ENCODE measurements at regions of chr10 and their contacts with region 1.

Region 1: GRCh38 chr10:102678842-102679289 is 34.6 kb downstream of the TRIM8 start:
- DNase-seq: no peak
- H3K4me3 ChIP-seq: no peak overlapping the region
- H3K27ac ChIP-seq: no peak overlapping the region
- H3K27me3 ChIP-seq: no peaks in the 10 kb centered on the region
- CTCF ChIP-seq: peak; percentile 85

Region 2: GRCh38 chr10:102660888-102661657 is 17.8 kb before region 1 on chr10:
- CTCF ChIA-PET with region 1: no interaction called
- POLR2A ChIA-PET with region 1: interaction called, 19 read pairs
- DNase-seq: peak; percentile 71
- H3K4me3 ChIP-seq: no peak overlapping the region
- H3K27ac ChIP-seq: peak overlapping the region; percentile 31
- H3K27me3 ChIP-seq: no peaks in the 10 kb centered on the region
- CTCF ChIP-seq: no peak

Region 3: DNA sequence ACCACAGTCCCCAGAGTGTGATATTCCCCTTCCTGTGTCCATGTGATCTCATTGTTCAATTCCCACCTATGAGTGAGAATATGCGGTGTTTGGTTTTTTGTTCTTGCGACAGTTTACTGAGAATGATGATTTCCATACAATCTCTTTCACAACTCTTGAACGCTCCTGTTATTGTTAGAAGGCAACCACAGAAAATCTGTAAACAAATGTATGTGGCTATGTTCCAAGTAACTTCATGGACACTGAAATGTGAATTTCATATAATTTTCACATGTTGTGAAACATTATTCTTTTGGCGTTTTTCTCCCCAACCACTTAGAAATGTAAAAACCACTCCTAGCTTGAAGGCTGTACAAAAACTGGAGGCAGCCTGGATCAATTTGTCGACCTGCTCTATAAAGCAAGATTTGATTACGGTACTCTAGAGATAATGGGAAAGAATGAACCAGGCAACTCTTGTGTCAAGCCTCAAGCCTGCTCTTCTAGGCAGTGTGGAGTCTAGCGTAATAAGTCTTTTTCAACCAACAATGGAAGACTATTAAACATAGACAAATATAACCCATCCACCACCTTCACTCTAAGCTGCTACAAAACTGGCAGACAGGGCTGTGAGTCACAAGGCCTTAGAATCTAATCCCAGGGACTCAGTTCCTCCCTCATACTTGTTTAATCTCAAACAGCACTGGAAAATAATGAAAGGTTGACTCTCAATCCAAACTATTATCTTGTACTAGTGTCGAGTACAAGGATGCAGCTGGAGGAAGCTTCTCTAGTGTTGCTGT is 12.6 kb after region 1 on chr10:
- CTCF ChIA-PET with region 1: interaction called, 21 read pairs
- POLR2A ChIA-PET with region 1: no interaction called
- DNase-seq: no peak
- H3K4me3 ChIP-seq: no peak overlapping the region
- H3K27ac ChIP-seq: no peak overlapping the region
- H3K27me3 ChIP-seq: no peaks in the 10 kb centered on the region
- CTCF ChIP-seq: no peak

Region 4: DNA sequence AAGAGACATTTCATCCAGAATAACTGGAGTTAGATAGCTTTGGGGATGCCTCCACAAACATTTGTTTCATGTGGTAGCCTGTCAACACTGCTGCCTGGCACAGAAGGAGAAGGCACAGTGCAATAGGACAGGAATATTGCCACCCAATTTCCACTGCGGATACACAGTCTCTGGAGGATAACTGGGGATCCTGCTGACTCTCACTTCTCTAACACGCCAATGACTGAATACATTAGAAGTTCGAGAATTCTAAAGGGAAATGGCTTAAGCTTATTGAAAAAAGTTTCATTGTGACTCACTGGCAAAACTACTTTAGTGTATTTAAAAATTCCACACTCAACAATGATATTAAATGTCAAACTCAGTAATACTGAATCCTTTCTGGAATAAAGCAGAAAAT is 22.4 kb after region 1 on chr10:
- CTCF ChIA-PET with region 1: interaction called, 14 read pairs
- POLR2A ChIA-PET with region 1: interaction called, 3 read pairs
- DNase-seq: no peak
- H3K4me3 ChIP-seq: no peak overlapping the region
- H3K27ac ChIP-seq: no peak overlapping the region
- H3K27me3 ChIP-seq: no peaks in the 10 kb centered on the region
- CTCF ChIP-seq: no peak

Region 5: GRCh38 chr10:102713814-102714620 is 35.2 kb after region 1 on chr10 and contains the start of gene ARL3:
- CTCF ChIA-PET with region 1: interaction called, 28 read pairs
- POLR2A ChIA-PET with region 1: interaction called, 71 read pairs
- DNase-seq: peak; percentile 96
- H3K4me3 ChIP-seq: peak within 1 kb of the TSS; percentile 93
- H3K27ac ChIP-seq: peak within 1 kb of the TSS; percentile 70
- H3K27me3 ChIP-seq: no peaks in the 10 kb centered on the region
- CTCF ChIP-seq: peak; percentile 54; the same call in 1 of the 2 replicates
- polyA plus RNA-seq, gene ARL3: 16.5 and 19.2 TPM in 2 replicates

Region 6: DNA sequence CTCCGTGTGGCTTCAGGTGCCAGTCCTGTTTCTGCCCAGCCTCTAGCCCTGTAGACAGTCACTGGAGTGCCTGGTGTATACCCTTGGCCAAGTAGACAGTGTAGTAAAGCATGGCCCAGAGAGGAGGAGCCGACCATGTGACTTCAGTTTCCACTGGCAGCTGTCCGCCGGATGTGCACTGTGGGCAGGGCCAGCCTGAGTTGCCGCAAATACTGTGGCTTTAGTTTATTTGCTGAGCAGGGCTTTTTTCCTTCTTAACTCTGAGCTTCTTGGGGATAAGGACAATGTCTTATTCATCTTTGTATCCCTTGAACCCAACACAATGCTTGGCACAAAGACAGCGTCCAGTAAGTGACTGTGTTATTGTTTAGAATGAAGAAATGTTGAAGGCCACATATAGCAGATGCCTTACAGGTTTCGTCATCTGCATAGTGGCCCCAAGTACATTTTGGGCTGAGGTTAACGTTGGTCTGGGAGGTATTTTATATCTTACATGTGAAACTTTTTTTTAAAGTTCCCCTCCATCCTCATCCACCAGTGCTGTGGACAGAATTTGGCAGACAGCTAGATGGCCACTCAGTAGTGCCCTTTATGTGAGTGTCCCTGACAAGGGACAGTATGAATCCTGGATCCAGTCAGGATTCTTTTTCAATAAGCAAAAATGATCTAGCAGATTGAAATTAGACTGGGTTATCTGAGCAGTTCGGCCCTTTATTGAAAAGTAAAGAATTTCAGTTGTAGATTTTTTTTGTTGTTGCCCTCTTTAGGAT is 117.7 kb after region 1 on chr10:
- CTCF ChIA-PET with region 1: no interaction called
- POLR2A ChIA-PET with region 1: no interaction called
- DNase-seq: no peak
- H3K4me3 ChIP-seq: no peak overlapping the region
- H3K27ac ChIP-seq: no peak overlapping the region
- H3K27me3 ChIP-seq: no peaks in the 10 kb centered on the region
- CTCF ChIP-seq: no peak